Activated T-helper 2 cell treated with anti-CD3 and anti-CD28 coated beads, Interferon-gamma antibody, Interleukin-2, Interleukin-4, amounts not matched to agents 10 μg/mL and 5 μg/mL and 100 μg/mL, durations not matched to agents 14 hours and 24 hours and 36 hours (primary cell): ENCODE measurements at regions of chr5 and their contacts with region 1.

Region 1: DNA sequence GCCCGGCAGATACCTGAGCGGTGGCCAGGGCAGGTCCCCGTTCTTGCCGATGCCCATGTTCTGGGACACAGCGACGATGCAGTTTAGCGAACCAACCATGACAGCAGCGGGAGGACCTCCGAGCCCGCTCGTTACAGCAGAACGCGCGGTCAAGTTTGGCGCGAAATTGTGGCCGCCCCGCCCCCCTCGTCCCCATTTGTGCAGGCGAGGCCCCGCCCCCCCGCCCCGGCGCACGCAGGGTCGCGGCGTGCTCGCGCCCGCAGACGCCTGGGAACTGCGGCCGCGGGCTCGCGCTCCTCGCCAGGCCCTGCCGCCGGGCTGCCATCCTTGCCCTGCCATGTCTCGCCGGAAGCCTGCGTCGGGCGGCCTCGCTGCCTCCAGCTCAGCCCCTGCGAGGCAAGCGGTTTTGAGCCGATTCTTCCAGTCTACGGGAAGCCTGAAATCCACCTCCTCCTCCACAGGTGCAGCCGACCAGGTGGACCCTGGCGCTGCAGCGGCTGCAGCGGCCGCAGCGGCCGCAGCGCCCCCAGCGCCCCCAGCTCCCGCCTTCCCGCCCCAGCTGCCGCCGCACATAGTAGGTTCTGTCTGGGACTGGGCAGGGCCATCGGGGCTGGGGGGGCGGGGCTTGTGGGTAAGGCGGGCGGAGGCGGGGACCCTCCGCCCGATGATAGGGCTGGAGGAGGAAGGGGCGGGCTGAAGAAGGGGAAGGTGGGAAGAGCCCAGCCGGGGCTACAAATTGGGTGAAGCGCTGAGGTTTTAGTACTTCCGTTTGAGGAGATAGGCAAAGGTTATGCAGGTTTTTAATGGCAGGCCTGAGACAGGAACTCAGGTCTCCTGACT is at the starts of genes DHFR and MSH3:
- DNase-seq: peak; percentile 85
- H3K4me3 Mint-ChIP-seq: peak within 1 kb of the TSS; percentile 88
- H3K27ac Mint-ChIP-seq: peak within 1 kb of the TSS; percentile 96
- H3K4me1 Mint-ChIP-seq: peaks cover 20% of the 10 kb centered on the region
- H3K27me3 Mint-ChIP-seq: no peaks in the 10 kb centered on the region
- total RNA-seq, gene DHFR: 55.7 and 56.9 TPM in 2 replicates
- total RNA-seq, gene MSH3: 20.6 and 21.2 TPM in 2 replicates

Region 2: DNA sequence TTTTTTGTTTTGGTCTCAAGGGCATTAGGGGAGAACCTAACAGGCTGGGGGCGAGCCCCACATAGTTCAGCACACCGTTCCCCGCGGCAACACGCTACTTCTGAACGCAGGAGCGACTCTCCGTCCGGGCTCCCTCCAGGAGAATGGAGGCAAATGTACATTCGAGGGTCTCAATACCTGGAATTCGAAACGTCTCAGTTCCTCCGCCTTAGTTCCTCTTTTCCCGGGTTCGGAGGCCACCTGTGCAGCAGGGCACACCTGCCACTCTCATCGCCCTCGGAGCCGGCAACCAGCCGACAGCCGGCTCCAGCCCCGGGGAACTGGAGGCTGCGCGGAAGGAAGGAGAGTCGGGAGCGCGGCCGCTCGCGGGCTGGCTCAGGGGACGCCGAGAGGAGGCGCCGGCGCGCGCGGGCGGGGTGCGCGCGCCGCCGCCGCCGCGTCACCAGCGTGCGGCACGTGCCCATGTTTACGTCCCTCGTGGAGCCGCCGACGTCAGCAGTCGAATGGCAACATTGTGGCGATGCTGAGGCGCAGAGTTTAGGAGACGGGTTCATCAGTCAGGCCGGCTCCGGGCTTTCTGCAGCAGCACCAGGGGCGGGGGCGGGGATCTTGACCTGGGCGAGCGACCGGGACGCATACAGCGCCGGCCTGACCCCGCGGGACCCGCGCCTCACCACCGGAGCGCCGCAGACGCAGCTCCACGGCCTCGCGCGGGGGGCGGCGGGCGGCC is 1418.8 kb before region 1 on chr5 and contains the start of gene JMY:
- intact Hi-C with region 1: loop called (anchors 10 kb)
- DNase-seq: peak; percentile 71
- H3K4me3 Mint-ChIP-seq: peak within 1 kb of the TSS; percentile 87
- H3K27ac Mint-ChIP-seq: peak within 1 kb of the TSS; percentile 92
- H3K4me1 Mint-ChIP-seq: peaks cover 22% of the 10 kb centered on the region
- H3K27me3 Mint-ChIP-seq: no peaks in the 10 kb centered on the region
- total RNA-seq, gene JMY: 4.4 and 5.8 TPM in 2 replicates

Region 3: GRCh38 chr5:80481019-80481893 is 173.4 kb before region 1 on chr5:
- intact Hi-C with region 1: loop called (anchors 5 kb)
- DNase-seq: peak; percentile 24
- H3K4me3 Mint-ChIP-seq: no peak overlapping the region
- H3K27ac Mint-ChIP-seq: no peak overlapping the region
- H3K4me1 Mint-ChIP-seq: peaks cover 7% of the 10 kb centered on the region
- H3K27me3 Mint-ChIP-seq: no peaks in the 10 kb centered on the region

Region 4: DNA sequence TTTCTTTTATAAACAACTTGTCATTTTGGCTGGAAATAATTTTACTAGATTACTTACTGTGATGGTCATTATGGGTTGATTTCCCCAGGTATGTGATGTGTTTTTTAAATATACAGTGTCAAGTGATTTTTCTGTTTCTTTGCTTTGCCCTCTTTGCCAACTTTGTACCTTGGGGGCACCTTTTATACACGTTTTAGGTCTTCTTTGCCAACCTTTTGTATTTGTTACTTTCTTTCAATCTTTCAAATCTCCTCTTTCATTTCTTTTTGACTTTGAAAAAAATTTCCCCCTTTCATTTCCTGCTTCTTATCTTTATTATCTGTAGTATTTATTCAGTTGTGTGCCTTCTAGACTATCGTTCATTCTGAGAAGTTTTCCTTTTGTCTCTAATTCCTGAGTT is 65.6 kb after region 1 on chr5:
- intact Hi-C with region 1: no loop called
- DNase-seq: no peak
- H3K4me3 Mint-ChIP-seq: no peak overlapping the region
- H3K27ac Mint-ChIP-seq: no peak overlapping the region
- H3K4me1 Mint-ChIP-seq: peaks cover 5% of the 10 kb centered on the region
- H3K27me3 Mint-ChIP-seq: no peaks in the 10 kb centered on the region